ENCODE measurements at regions of chr20 and their contacts with region 1.

Region 1: DNA sequence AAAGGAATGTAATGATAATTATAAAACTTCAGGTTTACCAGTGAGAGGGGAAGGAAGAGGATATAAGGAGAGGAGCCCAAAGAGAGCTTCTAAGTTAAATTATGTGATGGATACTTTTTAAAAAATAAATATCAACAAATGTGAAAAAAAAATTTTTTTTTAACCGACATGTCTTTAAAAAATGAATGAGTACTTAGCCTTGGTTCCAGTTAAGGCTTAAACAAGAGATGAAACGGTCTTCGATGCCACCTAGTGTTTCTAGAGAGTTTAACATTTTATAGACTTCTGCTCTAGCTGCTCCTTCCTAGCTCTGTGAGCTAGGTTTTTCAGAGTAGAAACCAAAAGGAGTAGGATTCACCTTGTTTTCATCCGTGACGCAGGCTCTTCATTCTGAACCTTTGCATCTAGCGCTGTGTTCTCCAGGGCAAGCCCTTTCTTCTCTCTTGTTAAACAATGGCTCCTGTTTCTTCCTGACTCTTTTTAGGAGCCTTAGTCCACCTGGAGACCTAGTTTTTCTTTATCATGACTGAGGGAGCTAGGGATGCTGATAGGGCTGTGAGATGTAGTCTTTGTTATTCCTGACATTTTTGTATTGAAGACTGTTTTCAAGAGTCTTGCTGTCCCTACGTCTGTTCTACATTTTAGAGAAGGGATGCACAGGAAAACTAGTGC is 42.4 kb upstream of the GNRH2 start:
- DNase-seq: no peak
- ATAC-seq: peak; percentile 92
- H3K4me3 ChIP-seq: no peak overlapping the region
- H3K27ac ChIP-seq: no peak overlapping the region
- H3K4me1 ChIP-seq: no peaks in the 10 kb centered on the region
- H3K27me3 ChIP-seq: no peaks in the 10 kb centered on the region
- CTCF ChIP-seq: peak; percentile 55 to 69 (median 57); a peak in 5 of 6 replicates
- EP300 ChIP-seq: no peak
- POLR2A ChIP-seq: no peak
- RAD21 ChIP-seq: peak; percentile 81

Region 2: DNA sequence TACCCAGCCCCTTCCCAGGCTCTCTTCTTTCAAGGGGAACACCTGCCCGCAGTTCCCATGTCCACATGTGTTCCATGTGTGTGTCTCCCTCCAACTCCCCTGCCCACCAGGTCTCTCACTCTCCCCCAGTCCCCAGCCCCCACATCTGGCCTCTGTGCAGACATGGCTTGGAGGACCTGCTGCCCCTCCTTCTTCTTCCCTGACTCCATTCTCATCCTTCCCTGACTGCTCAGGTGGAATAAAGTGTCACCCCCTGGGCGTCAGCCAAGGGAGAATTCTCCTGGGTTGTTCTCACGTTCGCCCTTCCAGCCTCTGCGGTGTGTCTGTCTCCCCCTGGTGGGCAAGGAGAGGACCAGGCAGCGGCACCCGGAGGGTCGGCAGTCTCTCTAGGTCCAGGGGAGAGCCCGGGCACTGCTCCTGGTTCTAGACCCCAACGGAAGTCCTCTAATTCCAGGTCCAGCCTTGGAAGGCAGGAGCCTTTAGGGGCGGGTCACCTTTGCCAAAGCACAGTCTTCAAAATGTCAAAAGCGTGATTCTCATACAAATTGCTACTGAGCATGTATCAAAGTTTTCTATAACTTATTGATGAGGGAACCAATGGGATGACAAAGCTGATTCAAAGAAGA is 257.9 kb before region 1 on chr20:
- CTCF ChIA-PET with region 1: interaction called, 11 read pairs
- POLR2A ChIA-PET with region 1: no interaction called
- RAD21 ChIA-PET with region 1: no interaction called
- SMC1A ChIA-PET with region 1: interaction called, 5 read pairs
- in situ Hi-C with region 1: no loop called
- intact Hi-C with region 1: no loop called
- DNase-seq: no peak
- ATAC-seq: peak; percentile 96
- H3K4me3 ChIP-seq: no peak overlapping the region
- H3K27ac ChIP-seq: no peak overlapping the region
- H3K4me1 ChIP-seq: no peaks in the 10 kb centered on the region
- H3K27me3 ChIP-seq: no peaks in the 10 kb centered on the region; a peak in 2 of 4 replicates
- CTCF ChIP-seq: peak; percentile 84 to 95 (median 90)
- EP300 ChIP-seq: no peak
- POLR2A ChIP-seq: no peak
- RAD21 ChIP-seq: peak; percentile 62

Region 3: GRCh38 chr20:2752567-2753460 is 248.2 kb before region 1 on chr20:
- CTCF ChIA-PET with region 1: interaction called, 7 read pairs
- POLR2A ChIA-PET with region 1: no interaction called
- RAD21 ChIA-PET with region 1: no interaction called
- SMC1A ChIA-PET with region 1: no interaction called
- in situ Hi-C with region 1: no loop called
- intact Hi-C with region 1: loop called (anchors 5 kb)
- DNase-seq: no peak
- ATAC-seq: peak; percentile 11; the same call in 1 of the 3 replicates
- H3K4me3 ChIP-seq: peak overlapping the region; percentile 41; the same call in 1 of the 2 replicates
- H3K27ac ChIP-seq: no peak overlapping the region
- H3K4me1 ChIP-seq: peaks cover 6% of the 10 kb centered on the region
- H3K27me3 ChIP-seq: peaks cover 9 to 12% of the 10 kb centered on the region in 2 experiments
- CTCF ChIP-seq: peak; percentile 36 to 70 (median 64)
- EP300 ChIP-seq: no peak
- POLR2A ChIP-seq: no peak
- RAD21 ChIP-seq: peak; percentile 23; the same call in 1 of the 2 replicates

Region 4: GRCh38 chr20:2849529-2849928 is 151.5 kb before region 1 on chr20:
- CTCF ChIA-PET with region 1: interaction called, 8 read pairs
- POLR2A ChIA-PET with region 1: no interaction called
- RAD21 ChIA-PET with region 1: interaction called, 3 read pairs
- SMC1A ChIA-PET with region 1: no interaction called
- in situ Hi-C with region 1: no loop called
- intact Hi-C with region 1: loop called (anchors 1 kb)
- DNase-seq: no peak
- ATAC-seq: no peak
- H3K4me3 ChIP-seq: no peak overlapping the region
- H3K27ac ChIP-seq: no peak overlapping the region
- H3K4me1 ChIP-seq: peaks cover 5% of the 10 kb centered on the region; the same call in 1 of the 2 replicates
- H3K27me3 ChIP-seq: no peaks in the 10 kb centered on the region
- CTCF ChIP-seq: no peak
- EP300 ChIP-seq: no peak
- POLR2A ChIP-seq: no peak
- RAD21 ChIP-seq: no peak

Region 5: GRCh38 chr20:2873010-2873746 is 127.8 kb before region 1 on chr20 and contains the start of gene PTPRA:
- CTCF ChIA-PET with region 1: interaction called, 8 read pairs
- POLR2A ChIA-PET with region 1: no interaction called
- RAD21 ChIA-PET with region 1: interaction called, 8 read pairs
- SMC1A ChIA-PET with region 1: interaction called, 4 read pairs
- in situ Hi-C with region 1: no loop called
- intact Hi-C with region 1: loop called (anchors 5 kb)
- DNase-seq: peak; percentile 59
- ATAC-seq: peak; percentile 94
- H3K4me3 ChIP-seq: peak within 1 kb of the TSS; percentile 99
- H3K27ac ChIP-seq: peak within 1 kb of the TSS; percentile 76
- H3K4me1 ChIP-seq: peaks cover 13% of the 10 kb centered on the region
- H3K27me3 ChIP-seq: no peaks in the 10 kb centered on the region
- CTCF ChIP-seq: no peak
- EP300 ChIP-seq: no peak
- POLR2A ChIP-seq: peak; percentile 92
- RAD21 ChIP-seq: no peak
- polyA plus RNA-seq, gene PTPRA: 3.9 to 8.0 TPM

Region 6: DNA sequence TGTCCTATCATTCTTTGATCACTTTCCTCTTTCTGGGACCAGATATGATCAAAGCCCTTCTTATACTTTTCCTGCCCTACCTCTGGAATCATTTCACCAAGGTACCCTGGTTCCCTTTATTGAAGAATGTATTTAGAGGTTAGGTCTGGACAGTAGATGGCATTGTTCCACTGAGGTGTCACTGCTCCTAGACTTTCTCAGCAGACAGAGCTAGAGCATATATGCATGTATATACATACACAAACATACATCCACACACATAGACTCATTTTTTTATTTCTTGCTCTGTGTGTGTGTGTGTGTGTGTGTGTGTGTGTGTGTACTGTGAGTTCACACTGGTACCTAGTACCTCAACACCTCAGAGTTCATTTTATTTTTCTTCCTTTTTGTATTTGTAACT is 86.8 kb before region 1 on chr20:
- CTCF ChIA-PET with region 1: interaction called, 10 read pairs
- POLR2A ChIA-PET with region 1: no interaction called
- RAD21 ChIA-PET with region 1: interaction called, 10 read pairs
- SMC1A ChIA-PET with region 1: interaction called, 4 read pairs
- in situ Hi-C with region 1: no loop called
- intact Hi-C with region 1: loop called (anchors 5 kb)
- DNase-seq: no peak
- ATAC-seq: peak; percentile 47; the same call in 1 of the 3 replicates
- H3K4me3 ChIP-seq: no peak overlapping the region
- H3K27ac ChIP-seq: no peak overlapping the region
- H3K4me1 ChIP-seq: no peaks in the 10 kb centered on the region
- H3K27me3 ChIP-seq: no peaks in the 10 kb centered on the region
- CTCF ChIP-seq: peak; percentile 22 to 58 (median 30); a peak in 4 of 6 replicates
- EP300 ChIP-seq: no peak
- POLR2A ChIP-seq: no peak
- RAD21 ChIP-seq: peak; percentile 55

Region 7: DNA sequence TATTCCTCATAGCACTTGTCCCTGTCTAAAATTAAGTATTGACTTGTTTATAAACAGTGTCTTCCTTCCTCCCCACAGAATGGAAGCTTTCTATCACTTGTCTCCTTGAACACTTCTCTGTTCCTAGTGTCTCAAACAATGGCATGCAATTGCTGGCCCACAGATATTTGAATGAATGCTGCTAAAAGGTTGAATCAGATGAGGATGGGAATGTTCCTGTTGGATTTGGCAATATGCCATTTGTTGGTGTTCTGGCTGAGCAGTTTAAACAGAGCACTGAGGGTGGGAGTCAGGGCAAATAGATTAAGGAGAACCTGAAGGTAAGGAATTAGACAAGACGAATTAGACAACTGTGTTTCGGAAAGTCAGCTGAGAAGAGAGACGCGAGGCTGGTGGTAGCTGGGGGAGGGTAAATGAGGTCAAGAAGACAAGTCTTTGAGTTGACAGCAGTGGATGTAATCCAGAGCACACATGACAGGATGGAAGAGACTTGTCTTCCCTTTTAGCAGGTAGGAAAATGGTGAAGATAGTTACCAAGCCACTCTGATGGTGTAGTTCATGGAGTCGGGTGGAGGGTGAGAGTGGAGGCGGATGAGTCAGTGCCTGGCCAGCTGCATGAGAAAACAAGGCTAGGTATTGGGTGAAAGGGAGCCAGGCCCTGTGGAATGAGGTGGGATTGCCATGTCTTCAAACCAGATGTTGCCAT is 15.9 kb before region 1 on chr20:
- CTCF ChIA-PET with region 1: interaction called, 18 read pairs
- POLR2A ChIA-PET with region 1: no interaction called
- RAD21 ChIA-PET with region 1: interaction called, 7 read pairs
- SMC1A ChIA-PET with region 1: interaction called, 5 read pairs
- in situ Hi-C with region 1: no loop called
- intact Hi-C with region 1: no loop called
- DNase-seq: no peak
- ATAC-seq: no peak
- H3K4me3 ChIP-seq: no peak overlapping the region
- H3K27ac ChIP-seq: no peak overlapping the region
- H3K4me1 ChIP-seq: peaks cover 15% of the 10 kb centered on the region
- H3K27me3 ChIP-seq: no peaks in the 10 kb centered on the region
- CTCF ChIP-seq: no peak
- EP300 ChIP-seq: no peak
- POLR2A ChIP-seq: no peak
- RAD21 ChIP-seq: no peak